CD4-positive, alpha-beta T cell (primary cell): ENCODE measurements at regions of chr9 and their contacts with region 1.

Region 1: GRCh38 chr9:19048966-19049916 is at the start of gene RRAGA:
- DNase-seq: peak; percentile 89 to 97 (median 93)
- ATAC-seq: peak; percentile 90
- H3K4me3 ChIP-seq: peak within 1 kb of the TSS; percentile 94
- H3K4me3 Mint-ChIP-seq: peak within 1 kb of the TSS; percentile 97
- H3K27ac ChIP-seq: peak within 1 kb of the TSS; percentile 86 to 93
- H3K27ac Mint-ChIP-seq: peak within 1 kb of the TSS; percentile 99
- H3K4me1 ChIP-seq: peaks cover 27% of the 10 kb centered on the region
- H3K4me1 Mint-ChIP-seq: peaks cover 50% of the 10 kb centered on the region
- H3K27me3 ChIP-seq: no peaks in the 10 kb centered on the region
- H3K27me3 Mint-ChIP-seq: no peaks in the 10 kb centered on the region
- CTCF ChIP-seq: peak; percentile 78
- total RNA-seq, gene RRAGA: 34.4 to 34.7 TPM

Region 2: DNA sequence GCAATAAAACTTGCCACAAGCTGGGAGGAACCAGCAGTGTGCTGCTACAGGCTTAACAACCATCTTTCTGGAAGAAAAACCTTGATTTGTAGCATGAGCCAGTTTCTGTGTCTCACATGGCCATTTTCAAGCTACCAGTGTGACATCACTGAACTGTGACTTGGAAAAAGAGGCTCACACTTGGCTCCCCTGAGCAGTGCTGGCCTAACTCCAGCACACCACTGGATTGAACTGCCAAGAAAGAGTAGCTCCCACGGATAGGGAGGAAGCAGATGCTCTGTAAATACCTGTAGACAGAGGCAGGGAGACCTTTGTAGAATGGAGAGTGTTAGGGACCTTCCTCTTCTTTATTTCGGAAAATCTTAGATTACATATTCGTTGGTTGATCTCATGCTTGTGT is 1272.5 kb before region 1 on chr9:
- CTCF ChIA-PET with region 1: no interaction called
- POLR2A ChIA-PET with region 1: no interaction called
- intact Hi-C with region 1: no loop called
- DNase-seq: no peak
- ATAC-seq: no peak
- H3K4me3 ChIP-seq: no peak overlapping the region
- H3K4me3 Mint-ChIP-seq: no peak overlapping the region
- H3K27ac ChIP-seq: no peak overlapping the region
- H3K27ac Mint-ChIP-seq: no peak overlapping the region
- H3K4me1 ChIP-seq: no peaks in the 10 kb centered on the region
- H3K4me1 Mint-ChIP-seq: no peaks in the 10 kb centered on the region
- H3K27me3 ChIP-seq: no peaks in the 10 kb centered on the region
- H3K27me3 Mint-ChIP-seq: no peaks in the 10 kb centered on the region
- CTCF ChIP-seq: no peak

Region 3: DNA sequence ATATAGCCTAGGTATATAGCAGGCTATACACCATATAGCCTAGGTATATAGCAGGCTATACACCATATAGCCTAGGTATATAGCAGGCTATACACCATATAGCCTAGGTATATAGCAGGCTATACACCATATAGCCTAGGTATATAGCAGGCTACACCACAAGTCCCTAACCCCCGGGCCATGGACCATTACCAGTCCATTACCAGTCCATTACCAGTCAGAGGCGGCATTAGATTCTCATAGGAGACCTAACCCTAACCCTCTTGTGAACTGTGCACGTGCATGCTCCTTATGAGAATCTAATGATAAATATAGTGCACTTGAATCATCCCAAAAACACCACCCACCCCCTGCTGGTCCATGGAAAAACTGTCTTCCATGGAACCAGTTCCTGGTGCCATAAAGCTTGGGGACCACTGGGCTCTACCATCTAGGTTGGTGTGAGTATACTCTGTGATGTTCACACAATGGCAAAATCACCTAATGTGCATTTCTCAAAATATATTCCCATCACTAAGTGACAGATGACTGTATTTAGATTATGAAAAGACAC is 73.3 kb after region 1 on chr9:
- CTCF ChIA-PET with region 1: no interaction called
- POLR2A ChIA-PET with region 1: interaction called, 13 read pairs
- intact Hi-C with region 1: loop called in 1 of 2 experiments (anchors 2 kb)
- DNase-seq: no peak
- ATAC-seq: no peak
- H3K4me3 ChIP-seq: no peak overlapping the region
- H3K4me3 Mint-ChIP-seq: no peak overlapping the region
- H3K27ac ChIP-seq: no peak overlapping the region
- H3K27ac Mint-ChIP-seq: peak overlapping the region; percentile 95
- H3K4me1 ChIP-seq: peaks cover 33% of the 10 kb centered on the region
- H3K4me1 Mint-ChIP-seq: peaks cover 65% of the 10 kb centered on the region
- H3K27me3 ChIP-seq: no peaks in the 10 kb centered on the region
- H3K27me3 Mint-ChIP-seq: no peaks in the 10 kb centered on the region
- CTCF ChIP-seq: no peak

Region 4: GRCh38 chr9:19127881-19128500 is 78.8 kb after region 1 on chr9:
- CTCF ChIA-PET with region 1: no interaction called
- POLR2A ChIA-PET with region 1: interaction called, 13 read pairs
- intact Hi-C with region 1: loop called in 1 of 2 experiments (anchors 2 kb)
- DNase-seq: peak; percentile 2 to 60 (median 32)
- ATAC-seq: peak; percentile 25
- H3K4me3 ChIP-seq: peak overlapping the region; percentile 90
- H3K4me3 Mint-ChIP-seq: peak overlapping the region; percentile 94
- H3K27ac ChIP-seq: peak overlapping the region; percentile 90 to 92
- H3K27ac Mint-ChIP-seq: peak overlapping the region; percentile 95
- H3K4me1 ChIP-seq: peaks cover 59% of the 10 kb centered on the region
- H3K4me1 Mint-ChIP-seq: peaks cover 64% of the 10 kb centered on the region
- H3K27me3 ChIP-seq: no peaks in the 10 kb centered on the region
- H3K27me3 Mint-ChIP-seq: no peaks in the 10 kb centered on the region
- CTCF ChIP-seq: no peak

Region 5: GRCh38 chr9:19184144-19184917 is 135.1 kb after region 1 on chr9:
- CTCF ChIA-PET with region 1: interaction called, 4 read pairs
- POLR2A ChIA-PET with region 1: interaction called, 10 read pairs
- intact Hi-C with region 1: no loop called
- DNase-seq: peak; percentile 43 to 90 (median 71)
- ATAC-seq: peak; percentile 99
- H3K4me3 ChIP-seq: no peak overlapping the region
- H3K4me3 Mint-ChIP-seq: peak overlapping the region; percentile 44
- H3K27ac ChIP-seq: peak overlapping the region; percentile 32 to 60
- H3K27ac Mint-ChIP-seq: peak overlapping the region; percentile 92
- H3K4me1 ChIP-seq: peaks cover 26% of the 10 kb centered on the region
- H3K4me1 Mint-ChIP-seq: peaks cover 13% of the 10 kb centered on the region
- H3K27me3 ChIP-seq: no peaks in the 10 kb centered on the region
- H3K27me3 Mint-ChIP-seq: no peaks in the 10 kb centered on the region
- CTCF ChIP-seq: no peak

Region 6: DNA sequence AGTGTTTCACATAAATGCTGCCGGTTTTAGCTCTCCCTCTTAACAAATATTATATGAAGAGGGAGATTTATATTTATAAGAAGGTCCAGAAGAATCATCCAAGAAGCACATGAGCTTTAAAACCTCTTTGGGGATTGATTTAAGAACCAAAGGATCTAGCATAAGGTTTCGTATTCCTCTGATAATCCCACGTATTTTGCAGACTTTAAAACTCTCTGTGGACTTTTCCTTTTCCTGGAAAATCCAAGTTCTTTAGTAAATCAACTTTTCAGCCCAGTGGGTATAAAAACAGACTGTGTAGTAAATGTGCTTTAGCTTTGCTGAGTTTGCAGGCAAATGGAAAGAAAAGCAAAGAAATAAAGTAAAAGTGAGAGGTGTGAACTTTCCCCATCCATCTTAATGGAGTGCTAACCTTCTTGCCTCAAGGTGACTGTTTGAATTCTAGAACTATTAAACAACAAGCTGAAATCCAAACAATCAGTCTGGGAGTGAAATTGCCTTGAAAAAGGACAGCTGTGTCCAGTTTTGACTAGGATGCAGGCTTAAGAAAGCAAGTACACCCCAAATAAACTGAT is 1103.0 kb after region 1 on chr9:
- CTCF ChIA-PET with region 1: no interaction called
- POLR2A ChIA-PET with region 1: no interaction called
- intact Hi-C with region 1: no loop called
- DNase-seq: no peak
- ATAC-seq: no peak
- H3K4me3 ChIP-seq: no peak overlapping the region
- H3K4me3 Mint-ChIP-seq: no peak overlapping the region
- H3K27ac ChIP-seq: no peak overlapping the region
- H3K27ac Mint-ChIP-seq: no peak overlapping the region
- H3K4me1 ChIP-seq: no peaks in the 10 kb centered on the region
- H3K4me1 Mint-ChIP-seq: no peaks in the 10 kb centered on the region
- H3K27me3 ChIP-seq: no peaks in the 10 kb centered on the region
- H3K27me3 Mint-ChIP-seq: peaks cover 10% of the 10 kb centered on the region
- CTCF ChIP-seq: no peak